ENCODE measurements at regions of chr1 and their contacts with region 1.

Region 1: GRCh38 chr1:19405761-19406487 is 79.4 kb downstream of the CAPZB start:
- DNase-seq: no peak
- ATAC-seq: no peak
- H3K4me3 Mint-ChIP-seq: no peak overlapping the region
- H3K27ac Mint-ChIP-seq: peak overlapping the region; percentile 48
- H3K4me1 Mint-ChIP-seq: peaks cover 70% of the 10 kb centered on the region
- H3K27me3 Mint-ChIP-seq: no peaks in the 10 kb centered on the region
- CTCF ChIP-seq: no peak

Region 2: DNA sequence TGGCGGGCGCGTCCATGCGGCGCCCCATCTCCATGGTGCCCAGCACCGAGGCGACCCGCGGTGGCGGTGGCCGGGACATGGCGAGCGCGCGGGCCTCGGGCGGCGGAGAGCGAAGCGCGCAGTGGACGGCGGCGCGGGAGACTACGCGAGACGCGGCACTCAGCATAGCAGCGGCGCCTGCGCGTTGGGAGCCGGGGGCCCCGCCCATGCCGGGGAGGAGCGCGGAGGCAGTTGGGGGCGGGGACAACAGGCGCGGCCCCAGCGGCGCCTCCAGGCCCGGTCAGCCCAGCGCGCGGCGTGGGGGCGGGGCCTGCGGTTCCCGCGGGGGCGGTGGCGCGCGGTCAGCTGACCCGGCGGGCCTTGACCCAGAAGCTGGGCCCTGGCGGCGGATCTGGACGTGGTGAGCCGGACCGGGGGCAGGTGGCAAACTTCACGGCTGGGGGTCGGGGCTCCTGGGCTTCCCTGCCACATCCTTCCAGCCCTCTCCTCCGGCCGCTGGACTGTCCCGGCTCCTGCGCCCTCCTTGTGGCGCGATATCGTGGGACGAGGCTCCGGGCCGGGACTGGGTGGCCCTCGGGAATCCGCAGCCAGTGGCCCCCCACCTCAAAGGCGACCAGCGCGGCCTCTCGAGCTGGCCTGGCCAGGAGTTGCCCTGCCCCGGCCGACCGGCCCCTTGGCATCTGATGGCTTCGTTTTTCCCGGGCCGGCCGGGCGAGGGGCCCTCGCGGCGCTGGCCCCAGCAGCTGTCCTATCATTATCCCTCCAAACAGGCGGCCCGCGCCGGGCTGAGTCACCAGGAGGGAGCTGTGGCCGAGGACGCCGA is 93.8 kb before region 1 on chr1 and contains the starts of genes AKR7A2 and SLC66A1:
- CTCF ChIA-PET with region 1: no interaction called
- POLR2A ChIA-PET with region 1: no interaction called
- DNase-seq: peak; percentile 92
- ATAC-seq: peak; percentile 95
- H3K4me3 Mint-ChIP-seq: peak within 1 kb of the TSS; percentile 94
- H3K27ac Mint-ChIP-seq: no peak within 1 kb of the TSS
- H3K4me1 Mint-ChIP-seq: peaks cover 13% of the 10 kb centered on the region
- H3K27me3 Mint-ChIP-seq: peaks cover 6% of the 10 kb centered on the region
- CTCF ChIP-seq: no peak
- total RNA-seq, gene AKR7A2: 43.4 to 51.6 TPM (median 50.6 TPM) in 3 replicates
- total RNA-seq, gene SLC66A1: 12.8 to 14.2 TPM (median 14.1 TPM) in 3 replicates

Region 3: DNA sequence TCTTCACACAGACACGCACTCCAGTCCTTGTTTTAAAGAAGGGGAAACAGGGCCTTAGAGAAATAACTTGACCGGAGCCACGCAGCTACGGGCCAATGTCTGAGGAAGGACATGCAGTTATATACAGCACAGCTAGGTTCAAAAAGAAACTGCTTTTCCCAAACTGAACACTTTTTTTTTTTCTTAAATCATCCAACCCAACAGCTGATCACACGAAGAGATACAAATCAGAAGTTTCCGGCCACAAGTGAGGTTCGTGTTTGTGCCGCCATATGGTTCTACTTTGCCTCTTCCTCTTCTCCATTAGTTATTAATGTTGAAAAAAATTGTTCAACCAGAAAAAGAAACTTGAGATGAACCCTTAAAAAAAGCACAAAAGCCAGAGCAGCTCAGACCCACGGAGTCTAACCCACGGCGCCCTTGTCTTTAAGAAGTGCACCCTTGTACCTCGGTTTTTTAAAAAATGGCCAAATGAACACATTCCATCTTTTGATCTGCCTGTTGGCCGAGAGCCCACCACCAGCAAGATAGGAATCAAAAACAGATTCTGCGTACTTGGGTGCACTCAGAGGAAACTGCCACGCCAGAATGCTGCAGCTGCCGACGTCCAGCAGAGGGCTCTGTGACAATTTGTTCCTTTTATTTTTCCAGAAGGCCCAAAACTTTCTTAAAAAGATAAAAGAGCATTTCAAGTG is 14.9 kb before region 1 on chr1:
- CTCF ChIA-PET with region 1: interaction called, 71 read pairs
- POLR2A ChIA-PET with region 1: interaction called, 5 read pairs
- DNase-seq: peak; percentile 51
- ATAC-seq: no peak
- H3K4me3 Mint-ChIP-seq: no peak overlapping the region
- H3K27ac Mint-ChIP-seq: peak overlapping the region; percentile 74
- H3K4me1 Mint-ChIP-seq: peaks cover 27% of the 10 kb centered on the region
- H3K27me3 Mint-ChIP-seq: no peaks in the 10 kb centered on the region
- CTCF ChIP-seq: peak; percentile 46

Region 4: DNA sequence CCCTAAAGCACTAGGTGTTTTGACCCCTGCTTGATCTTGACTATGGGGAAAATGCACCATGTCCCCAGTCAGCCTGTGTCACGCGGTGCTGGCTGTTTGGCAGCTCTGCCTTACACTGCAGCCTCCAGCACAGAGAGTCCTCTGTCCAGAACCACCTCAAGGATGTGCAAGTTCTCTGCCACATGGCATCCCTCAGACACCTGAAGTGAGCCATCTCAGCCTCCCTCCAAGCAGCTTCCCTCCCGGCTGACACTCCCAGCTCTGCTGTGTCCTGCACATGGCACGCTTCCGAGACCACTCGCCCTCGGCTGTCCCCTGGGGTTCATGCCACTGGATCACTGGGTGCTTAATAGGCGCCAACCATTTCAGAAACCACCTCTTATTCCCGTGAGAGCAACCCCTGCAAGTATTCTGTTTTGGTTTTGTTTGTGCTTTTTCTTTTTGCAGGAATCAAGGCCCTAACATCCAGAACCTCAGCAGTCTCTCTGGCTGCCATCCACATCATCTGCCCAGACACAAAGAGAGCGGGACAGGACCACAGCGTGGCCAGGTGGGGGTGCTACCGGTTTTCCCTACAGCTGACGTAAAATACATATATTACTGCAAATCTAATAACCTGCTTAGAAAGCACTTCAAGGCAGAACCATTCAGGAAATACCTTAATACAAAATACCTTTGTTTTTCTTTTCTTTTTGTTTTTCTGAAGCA is 33.7 kb after region 1 on chr1:
- CTCF ChIA-PET with region 1: interaction called, 10 read pairs
- POLR2A ChIA-PET with region 1: interaction called, 5 read pairs
- DNase-seq: peak; percentile 54
- ATAC-seq: peak; percentile 74
- H3K4me3 Mint-ChIP-seq: no peak overlapping the region
- H3K27ac Mint-ChIP-seq: peak overlapping the region; percentile 70
- H3K4me1 Mint-ChIP-seq: peaks cover 39% of the 10 kb centered on the region
- H3K27me3 Mint-ChIP-seq: no peaks in the 10 kb centered on the region
- CTCF ChIP-seq: no peak

Measured in WTC11 (cell line).